ENCODE measurements at regions of chr7 and their contacts with region 1.

Region 1: GRCh38 chr7:35839860-35840854 is 39.3 kb downstream of the SEPTIN7 start:
- DNase-seq: no peak
- H3K4me3 Mint-ChIP-seq: no peak overlapping the region
- H3K27ac Mint-ChIP-seq: no peak overlapping the region
- H3K4me1 Mint-ChIP-seq: peaks cover 16% of the 10 kb centered on the region
- H3K27me3 Mint-ChIP-seq: no peaks in the 10 kb centered on the region

Region 2: GRCh38 chr7:35818513-35818912 is 21.6 kb before region 1 on chr7:
- intact Hi-C with region 1: loop called (anchors 2 kb)
- DNase-seq: peak; percentile 2
- H3K4me3 Mint-ChIP-seq: peak overlapping the region; percentile 48
- H3K27ac Mint-ChIP-seq: peak overlapping the region; percentile 88
- H3K4me1 Mint-ChIP-seq: peaks cover 52% of the 10 kb centered on the region
- H3K27me3 Mint-ChIP-seq: no peaks in the 10 kb centered on the region

Region 3: GRCh38 chr7:35875292-35875691 is 35.1 kb after region 1 on chr7:
- intact Hi-C with region 1: loop called (anchors 5 kb)
- DNase-seq: no peak
- H3K4me3 Mint-ChIP-seq: no peak overlapping the region
- H3K27ac Mint-ChIP-seq: no peak overlapping the region
- H3K4me1 Mint-ChIP-seq: peaks cover 2% of the 10 kb centered on the region
- H3K27me3 Mint-ChIP-seq: no peaks in the 10 kb centered on the region

Region 4: DNA sequence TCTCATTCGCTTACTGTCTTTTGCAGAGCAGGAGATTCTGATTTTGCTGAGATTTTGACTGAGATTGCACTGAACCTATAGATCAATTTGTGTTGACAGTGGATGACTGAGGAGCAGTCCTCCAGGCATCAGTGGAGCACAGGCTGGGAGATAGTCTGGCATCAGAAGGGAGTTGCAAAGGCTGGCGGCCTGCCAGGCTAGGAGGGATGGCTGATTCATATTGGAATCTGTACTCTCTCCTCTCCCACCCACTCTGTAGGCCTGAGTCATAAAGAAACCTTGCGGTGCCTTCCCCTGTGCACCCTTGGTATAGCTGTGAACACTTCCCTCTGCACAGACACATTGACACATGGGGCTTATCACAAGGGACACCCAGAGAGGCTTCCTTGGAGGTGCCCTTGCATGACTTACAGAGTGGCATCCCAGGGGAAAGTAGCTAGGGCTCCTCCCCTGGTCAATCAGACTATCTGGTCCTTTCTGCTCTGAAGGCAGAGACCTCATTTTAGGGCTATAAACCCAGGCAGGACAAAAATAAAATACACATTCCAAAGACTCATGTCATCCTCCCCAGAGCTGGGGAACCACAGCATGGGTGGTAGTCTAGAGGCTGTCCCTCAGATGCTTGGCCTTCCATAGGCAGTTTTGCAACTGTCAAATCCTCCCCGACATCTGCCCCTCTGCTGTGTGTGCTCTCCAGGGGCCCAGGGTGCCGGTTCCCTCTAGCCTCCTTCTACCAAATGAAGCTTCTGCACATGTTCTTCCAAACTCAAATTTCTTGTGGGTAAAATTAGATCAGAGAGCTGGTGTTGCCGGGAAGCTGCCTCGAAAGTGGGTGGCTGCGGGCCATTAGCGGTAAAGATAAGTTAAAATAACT is 275.5 kb after region 1 on chr7:
- intact Hi-C with region 1: no loop called
- DNase-seq: peak; percentile 83
- H3K4me3 Mint-ChIP-seq: no peak overlapping the region
- H3K27ac Mint-ChIP-seq: peak overlapping the region; percentile 36
- H3K4me1 Mint-ChIP-seq: peaks cover 21% of the 10 kb centered on the region
- H3K27me3 Mint-ChIP-seq: peaks cover 28% of the 10 kb centered on the region

Region 5: DNA sequence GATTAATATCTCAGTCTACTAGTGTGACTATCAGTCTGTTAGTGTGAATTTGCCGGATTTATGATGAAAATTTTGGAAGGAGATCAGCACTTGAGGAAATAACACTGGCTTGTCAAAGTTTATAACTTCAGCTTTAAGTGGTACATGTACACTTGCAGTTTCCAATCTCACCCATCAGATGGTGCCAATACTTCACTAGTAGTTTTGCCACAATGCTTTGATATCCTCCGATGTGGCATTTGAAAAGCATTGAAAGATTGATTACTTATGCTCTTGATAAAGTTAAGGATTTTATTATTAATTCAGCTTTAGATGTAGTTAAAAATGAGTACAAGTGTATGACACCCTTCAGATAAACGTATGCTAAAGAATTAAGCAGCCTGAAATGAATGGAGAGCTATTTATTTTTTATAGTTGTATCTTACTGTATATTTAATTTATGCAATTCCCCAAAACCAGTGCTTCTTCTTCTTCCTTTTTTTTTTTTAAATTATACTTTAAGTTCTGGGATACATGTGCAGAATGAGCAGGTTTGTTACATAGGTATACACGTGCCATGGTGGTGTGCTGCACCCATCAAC is 647.7 kb after region 1 on chr7:
- intact Hi-C with region 1: no loop called
- DNase-seq: peak; percentile 85
- H3K4me3 Mint-ChIP-seq: no peak overlapping the region
- H3K27ac Mint-ChIP-seq: no peak overlapping the region
- H3K4me1 Mint-ChIP-seq: peaks cover 4% of the 10 kb centered on the region
- H3K27me3 Mint-ChIP-seq: peaks cover 12% of the 10 kb centered on the region

Measured in activated CD4-positive, alpha-beta T cell treated with anti-CD3 and anti-CD28 coated beads, Interleukin-2, amount 10 ng/mL, durations not matched to agents 24 days and 14 days (primary cell).